ENCODE measurements at regions of chr6 and their contacts with region 1.

Region 1: GRCh38 chr6:125114248-125114858 is 39.2 kb upstream of the TPD52L1 start:
- DNase-seq: peak; percentile 84
- H3K4me3 ChIP-seq: no peak overlapping the region
- H3K27ac ChIP-seq: no peak overlapping the region
- H3K4me1 ChIP-seq: no peaks in the 10 kb centered on the region
- H3K27me3 ChIP-seq: no peaks in the 10 kb centered on the region
- CTCF ChIP-seq: peak; percentile 66 to 76 (median 70)
- POLR2A ChIP-seq: no peak

Region 2: DNA sequence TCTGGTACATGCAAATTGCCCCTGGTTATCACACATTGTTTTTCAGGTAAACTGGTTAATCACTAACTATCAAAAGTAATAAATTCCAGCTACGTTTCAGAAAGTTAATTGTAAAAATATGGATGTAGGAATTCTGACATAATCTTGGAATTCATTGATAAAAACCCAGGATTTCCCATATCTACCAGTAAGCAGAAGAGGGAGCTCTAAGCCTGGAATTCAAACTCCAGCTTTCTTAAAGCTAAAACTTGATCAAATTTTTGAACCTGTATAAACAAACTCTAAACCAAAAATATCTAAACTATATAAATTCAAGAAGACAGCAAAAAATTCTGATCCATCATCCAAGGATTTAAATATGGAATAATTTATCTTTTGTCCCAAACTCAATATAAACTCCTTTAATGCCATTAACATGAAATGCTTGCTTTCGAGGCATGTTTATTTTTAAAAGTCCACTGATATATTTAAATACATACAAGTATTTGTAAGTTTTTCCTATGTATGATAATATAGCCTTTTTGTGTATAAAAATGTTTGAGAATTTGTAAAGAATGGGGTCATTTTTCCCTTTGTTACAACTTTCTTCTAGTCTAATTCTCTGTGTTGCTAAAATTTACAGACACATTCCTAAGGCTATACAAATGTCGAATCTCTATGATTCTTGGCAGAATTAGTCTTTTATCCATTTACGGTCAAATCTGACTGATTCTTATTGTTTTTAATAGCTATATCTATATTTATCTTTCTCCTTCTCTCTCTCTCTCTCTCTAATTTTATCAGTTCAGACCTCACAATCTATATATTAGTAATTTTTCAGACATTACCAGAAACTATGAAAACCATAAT is 243.5 kb before region 1 on chr6:
- intact Hi-C with region 1: loop called (anchors 5 kb)
- DNase-seq: no peak
- H3K4me3 ChIP-seq: no peak overlapping the region
- H3K27ac ChIP-seq: no peak overlapping the region
- H3K4me1 ChIP-seq: no peaks in the 10 kb centered on the region
- H3K27me3 ChIP-seq: no peaks in the 10 kb centered on the region
- CTCF ChIP-seq: peak; percentile 23 to 53 (median 42)
- POLR2A ChIP-seq: no peak

Measured in testis (tissue), 5 donors.